ENCODE measurements at regions of chr3 and their contacts with region 1.

Region 1: GRCh38 chr3:16600780-16601539 is 4.3 kb downstream of the DAZL start:
- DNase-seq: peak; percentile 84
- ATAC-seq: peak; percentile 70 to 75
- H3K4me3 ChIP-seq: no peak overlapping the region
- H3K27ac ChIP-seq: no peak overlapping the region
- H3K4me1 ChIP-seq: peaks cover 3% of the 10 kb centered on the region
- H3K27me3 ChIP-seq: no peaks in the 10 kb centered on the region
- CTCF ChIP-seq: peak; percentile 83

Region 2: DNA sequence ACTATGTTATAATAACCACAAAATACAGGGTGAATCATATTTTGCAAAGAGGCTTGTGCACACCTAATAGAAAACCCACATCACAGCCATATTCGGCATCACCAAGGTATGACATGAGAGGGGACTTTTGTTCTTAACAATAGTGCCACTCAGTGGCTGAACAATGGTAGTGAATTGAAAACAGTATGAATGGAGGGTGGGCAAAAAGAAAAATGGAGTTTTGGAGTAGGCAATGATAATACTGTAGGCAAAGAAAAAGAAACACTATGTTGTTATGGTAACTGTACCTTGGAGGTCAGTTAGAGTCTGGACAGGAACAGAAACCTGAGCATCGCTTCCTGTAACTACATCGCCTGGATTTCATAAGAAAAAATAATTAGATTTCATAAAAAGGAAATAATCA is 632.4 kb after region 1 on chr3:
- intact Hi-C with region 1: loop called (anchors 10 kb)
- DNase-seq: no peak
- ATAC-seq: peak; percentile 72 to 80
- H3K4me3 ChIP-seq: no peak overlapping the region
- H3K27ac ChIP-seq: no peak overlapping the region
- H3K4me1 ChIP-seq: peaks cover 4% of the 10 kb centered on the region
- H3K27me3 ChIP-seq: no peaks in the 10 kb centered on the region
- CTCF ChIP-seq: peak; percentile 63